Esophagus muscularis mucosa (tissue), 4 donors: ENCODE measurements at regions of chr1 and their contacts with region 1.

Region 1: DNA sequence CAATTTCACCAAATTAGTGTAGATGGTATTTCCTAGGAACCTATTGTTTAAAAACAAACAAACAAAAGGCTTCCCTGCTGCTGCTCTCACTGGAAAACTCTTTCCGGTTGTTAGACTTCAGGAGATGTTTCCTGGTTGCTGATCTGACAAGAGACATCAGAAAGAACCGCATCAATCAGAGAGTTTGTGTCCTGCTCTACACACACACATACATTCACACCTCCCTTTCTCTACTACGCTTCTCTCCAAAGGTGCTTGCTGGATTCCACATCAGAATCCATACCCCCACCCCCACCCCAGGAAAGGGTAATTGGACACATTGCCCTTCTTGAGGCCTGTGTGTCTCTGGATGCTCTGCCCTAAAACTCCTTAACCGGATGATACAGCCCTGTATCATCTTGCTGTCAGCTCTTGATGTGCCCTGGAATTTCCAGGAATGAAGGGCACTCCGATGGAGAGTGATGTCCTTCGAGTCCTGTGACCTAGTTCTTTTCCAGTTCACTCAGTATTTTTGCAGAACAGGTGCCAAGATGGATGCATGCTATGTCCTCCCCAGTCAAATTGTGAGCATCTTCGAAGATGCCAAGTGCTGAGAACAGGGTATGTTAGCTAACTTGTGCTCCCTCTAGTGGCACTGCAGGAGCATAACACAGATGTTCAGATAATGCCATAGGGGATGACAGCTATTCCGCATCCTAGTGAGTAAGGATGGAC is 113.7 kb upstream of the SLC35F3 start:
- DNase-seq: no peak
- H3K4me3 ChIP-seq: no peak overlapping the region
- H3K27ac ChIP-seq: no peak overlapping the region
- H3K4me1 ChIP-seq: no peaks in the 10 kb centered on the region
- H3K27me3 ChIP-seq: peaks cover 0 to 13% (median 0%) of the 10 kb centered on the region in 4 donors
- CTCF ChIP-seq: peak; percentile 79 to 88 (median 83)
- EP300 ChIP-seq: no peak
- POLR2A ChIP-seq: no peak

Region 2: GRCh38 chr1:233304489-233305102 is 486.2 kb before region 1 on chr1:
- intact Hi-C with region 1: loop called (anchors 10 kb)
- DNase-seq: no peak
- H3K4me3 ChIP-seq: no peak overlapping the region
- H3K27ac ChIP-seq: no peak overlapping the region
- H3K4me1 ChIP-seq: no peaks in the 10 kb centered on the region
- H3K27me3 ChIP-seq: no peaks in the 10 kb centered on the region
- CTCF ChIP-seq: peak; percentile 59 to 75 (median 64)
- EP300 ChIP-seq: no peak
- POLR2A ChIP-seq: no peak

Region 3: DNA sequence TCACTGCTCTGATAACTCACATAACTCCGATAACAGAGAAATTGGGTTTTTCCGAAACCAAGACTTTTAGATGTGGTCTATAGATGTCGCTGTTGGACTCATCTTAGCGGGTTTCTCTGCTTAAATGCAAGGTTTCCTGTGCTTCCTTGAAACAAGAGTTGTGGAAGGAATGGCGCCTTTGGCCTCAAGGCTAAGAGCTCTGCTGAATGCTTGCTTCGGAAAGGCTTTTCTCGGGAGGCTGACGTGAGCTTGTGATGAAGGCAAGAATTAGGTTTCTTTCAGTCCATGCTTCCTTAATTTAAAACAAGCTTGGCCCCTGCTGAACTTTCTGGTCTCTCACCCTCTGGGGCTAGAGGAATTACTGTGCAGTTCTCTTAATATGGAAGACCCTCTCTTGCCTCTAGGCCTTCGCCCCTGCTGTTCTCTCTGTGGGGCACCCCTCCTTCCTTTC is 349.8 kb before region 1 on chr1:
- intact Hi-C with region 1: loop called (anchors 2 kb)
- DNase-seq: no peak
- H3K4me3 ChIP-seq: no peak overlapping the region
- H3K27ac ChIP-seq: no peak overlapping the region
- H3K4me1 ChIP-seq: peaks cover 0 to 4% (median 0%) of the 10 kb centered on the region in 4 donors
- H3K27me3 ChIP-seq: peaks cover 0 to 19% (median 0%) of the 10 kb centered on the region in 4 donors
- CTCF ChIP-seq: peak; percentile 38 to 58 (median 56)
- EP300 ChIP-seq: no peak
- POLR2A ChIP-seq: no peak

Region 4: DNA sequence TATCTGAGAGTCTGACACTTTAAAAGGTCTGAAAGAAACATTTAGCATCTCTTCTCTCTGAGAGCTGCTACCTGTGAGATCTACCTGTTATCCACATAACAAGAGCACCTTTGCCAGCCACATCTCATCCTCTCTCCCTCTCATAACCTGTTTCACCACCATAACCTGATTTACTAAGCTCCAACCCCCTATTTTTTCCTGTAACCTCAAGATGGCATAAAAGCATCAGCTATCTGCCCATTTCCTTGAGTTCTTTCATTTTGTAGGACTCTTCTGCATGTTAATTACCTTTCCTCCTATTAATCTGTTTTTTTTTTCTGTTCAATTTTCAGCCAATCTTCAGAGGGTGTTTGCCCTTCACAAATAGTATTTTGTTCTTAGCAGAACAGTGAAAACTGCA is 313.5 kb before region 1 on chr1:
- intact Hi-C with region 1: no loop called
- DNase-seq: no peak
- H3K4me3 ChIP-seq: no peak overlapping the region
- H3K27ac ChIP-seq: no peak overlapping the region
- H3K4me1 ChIP-seq: no peaks in the 10 kb centered on the region
- H3K27me3 ChIP-seq: peaks cover 0 to 6% (median 0%) of the 10 kb centered on the region in 4 donors
- CTCF ChIP-seq: no peak
- EP300 ChIP-seq: no peak
- POLR2A ChIP-seq: no peak

Region 5: DNA sequence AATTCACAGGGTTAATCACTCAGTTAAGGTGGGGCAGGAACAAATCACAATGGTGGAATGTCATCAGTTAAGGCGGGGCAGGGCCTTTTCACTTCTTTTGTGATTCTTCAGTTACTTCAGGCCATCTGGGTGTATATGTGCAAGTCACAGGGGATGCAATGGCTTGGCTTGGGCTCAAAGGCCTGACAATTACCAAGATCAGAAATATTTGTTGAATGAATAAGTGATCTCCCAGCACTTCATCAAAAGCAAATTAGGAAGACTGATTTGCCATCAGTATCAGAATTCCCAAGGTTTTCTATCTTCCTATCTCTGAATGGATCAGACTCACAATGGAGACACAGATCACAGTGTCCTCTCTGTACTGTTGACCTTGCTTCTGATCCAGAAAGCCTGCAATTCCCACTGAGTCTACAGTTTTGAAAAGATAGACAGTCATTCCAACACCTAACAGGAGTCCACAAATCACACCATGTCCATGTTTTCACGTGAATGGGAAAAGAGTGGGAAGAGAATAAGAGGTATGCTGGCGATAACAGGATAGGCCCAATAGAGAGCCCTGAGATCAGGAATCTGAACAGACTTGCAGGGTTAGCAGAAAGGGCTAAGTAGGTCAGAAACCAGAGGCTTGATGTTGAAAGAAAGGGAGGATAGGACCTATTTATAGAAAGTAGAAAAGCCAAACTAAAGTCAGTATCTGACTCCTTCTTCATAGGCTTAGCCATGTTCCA is 101.6 kb before region 1 on chr1:
- intact Hi-C with region 1: no loop called
- DNase-seq: no peak
- H3K4me3 ChIP-seq: no peak overlapping the region
- H3K27ac ChIP-seq: no peak overlapping the region
- H3K4me1 ChIP-seq: peaks cover 0 to 10% (median 6%) of the 10 kb centered on the region in 4 donors
- H3K27me3 ChIP-seq: no peaks in the 10 kb centered on the region
- CTCF ChIP-seq: no peak
- EP300 ChIP-seq: no peak
- POLR2A ChIP-seq: no peak

Region 6: DNA sequence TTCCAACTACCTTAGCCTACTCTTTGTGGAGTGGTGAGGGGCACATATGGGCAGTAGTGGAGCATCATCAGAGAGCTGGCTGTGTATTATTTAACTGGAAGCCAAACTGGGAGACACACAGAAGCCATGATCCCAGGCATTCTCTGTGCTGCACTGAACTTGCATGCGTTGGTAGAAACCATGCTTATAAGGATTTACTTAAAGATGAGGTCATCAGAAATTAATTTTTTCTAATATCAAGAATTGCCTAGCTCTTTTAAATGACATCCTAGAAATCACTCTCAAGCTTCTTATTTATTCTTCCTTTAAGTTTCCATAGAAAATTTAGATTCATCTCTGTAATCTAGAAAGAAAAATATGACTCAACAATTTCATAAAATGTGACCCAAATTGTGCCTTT is 40.7 kb before region 1 on chr1:
- intact Hi-C with region 1: no loop called
- DNase-seq: no peak
- H3K4me3 ChIP-seq: no peak overlapping the region
- H3K27ac ChIP-seq: no peak overlapping the region
- H3K4me1 ChIP-seq: peaks cover 0 to 7% (median 3%) of the 10 kb centered on the region in 4 donors
- H3K27me3 ChIP-seq: no peaks in the 10 kb centered on the region
- CTCF ChIP-seq: no peak
- EP300 ChIP-seq: no peak
- POLR2A ChIP-seq: no peak

Region 7: DNA sequence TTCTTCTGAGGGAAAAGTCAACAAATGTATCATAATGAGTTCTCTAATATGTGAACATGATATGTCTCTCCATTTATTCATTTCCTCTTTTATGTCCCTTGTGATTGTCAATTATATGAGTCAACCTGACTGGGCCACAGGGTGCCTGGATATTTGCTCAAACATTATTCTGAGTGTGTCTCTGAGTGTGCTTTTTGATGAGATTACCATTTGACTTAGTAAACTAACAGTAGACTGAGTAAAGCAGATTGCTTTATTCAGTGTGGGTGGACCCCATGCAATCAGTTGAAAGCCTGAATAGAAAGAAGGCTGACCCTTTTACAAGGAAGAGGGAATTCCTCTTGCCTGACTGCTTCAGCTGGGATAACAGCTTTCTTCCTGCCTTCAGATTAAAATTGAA is 256.3 kb after region 1 on chr1:
- intact Hi-C with region 1: no loop called
- DNase-seq: no peak
- H3K4me3 ChIP-seq: no peak overlapping the region
- H3K27ac ChIP-seq: no peak overlapping the region
- H3K4me1 ChIP-seq: no peaks in the 10 kb centered on the region
- H3K27me3 ChIP-seq: no peaks in the 10 kb centered on the region
- CTCF ChIP-seq: no peak
- EP300 ChIP-seq: no peak
- POLR2A ChIP-seq: no peak